Activated CD4-positive, alpha-beta memory T cell treated with anti-CD3 and anti-CD28 coated beads for 36 hours (primary cell): ENCODE measurements at regions of chr1 and their contacts with region 1.

Region 1: DNA sequence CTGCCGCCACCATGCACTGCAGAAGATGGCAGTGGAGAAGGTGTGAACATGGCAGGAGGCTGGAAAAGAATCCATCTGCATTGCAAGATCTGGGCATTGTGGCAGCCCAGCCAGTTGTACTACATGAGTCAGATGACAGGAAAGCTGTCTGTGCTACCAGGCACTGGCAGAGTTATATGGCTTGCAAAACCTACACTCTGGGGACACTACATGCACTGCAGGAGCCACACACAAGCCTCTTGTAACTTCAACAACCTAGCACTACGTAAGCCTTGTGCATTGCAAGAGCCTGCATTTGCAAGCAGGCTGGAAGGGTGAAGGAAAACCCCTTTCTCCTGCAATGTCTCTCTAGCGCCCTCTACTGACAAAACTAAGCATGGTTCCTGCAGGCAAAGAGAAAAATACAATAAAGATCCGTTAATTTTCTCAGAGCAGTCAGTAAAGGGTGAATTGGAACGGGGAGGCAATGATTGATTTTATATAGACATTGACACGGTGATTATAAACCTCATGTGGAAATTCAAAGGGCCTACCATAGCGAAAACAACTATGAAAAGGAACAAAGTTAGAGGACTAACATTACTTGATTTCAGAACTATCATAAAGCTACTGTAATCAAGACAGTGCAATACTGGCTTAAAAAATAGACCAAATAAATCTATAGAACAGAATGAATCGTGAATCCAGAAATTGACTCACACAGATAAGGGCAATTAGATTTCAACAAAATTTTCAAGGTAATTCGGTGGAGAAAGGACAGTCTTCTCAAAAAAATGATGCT is 26.2 kb upstream of the DYNLT5 start:
- DNase-seq: peak; percentile 61
- H3K4me3 Mint-ChIP-seq: no peak overlapping the region
- H3K27ac Mint-ChIP-seq: no peak overlapping the region
- H3K4me1 Mint-ChIP-seq: peaks cover 10% of the 10 kb centered on the region
- H3K27me3 Mint-ChIP-seq: peaks cover 8% of the 10 kb centered on the region

Region 2: GRCh38 chr1:65958561-65959350 is 767.3 kb before region 1 on chr1:
- CTCF ChIA-PET with region 1: no interaction called
- POLR2A ChIA-PET with region 1: no interaction called
- intact Hi-C with region 1: loop called (anchors 5 kb)
- DNase-seq: peak; percentile 13
- H3K4me3 Mint-ChIP-seq: no peak overlapping the region
- H3K27ac Mint-ChIP-seq: no peak overlapping the region
- H3K4me1 Mint-ChIP-seq: no peaks in the 10 kb centered on the region
- H3K27me3 Mint-ChIP-seq: peaks cover 2% of the 10 kb centered on the region

Region 3: GRCh38 chr1:66464802-66465201 is 261.3 kb before region 1 on chr1:
- CTCF ChIA-PET with region 1: no interaction called
- POLR2A ChIA-PET with region 1: no interaction called
- intact Hi-C with region 1: no loop called
- DNase-seq: no peak
- H3K4me3 Mint-ChIP-seq: no peak overlapping the region
- H3K27ac Mint-ChIP-seq: no peak overlapping the region
- H3K4me1 Mint-ChIP-seq: no peaks in the 10 kb centered on the region
- H3K27me3 Mint-ChIP-seq: peaks cover 15% of the 10 kb centered on the region

Region 4: GRCh38 chr1:66607458-66607857 is 118.6 kb before region 1 on chr1:
- CTCF ChIA-PET with region 1: no interaction called
- POLR2A ChIA-PET with region 1: no interaction called
- intact Hi-C with region 1: loop called (anchors 5 kb)
- DNase-seq: no peak
- H3K4me3 Mint-ChIP-seq: no peak overlapping the region
- H3K27ac Mint-ChIP-seq: no peak overlapping the region
- H3K4me1 Mint-ChIP-seq: no peaks in the 10 kb centered on the region
- H3K27me3 Mint-ChIP-seq: peaks cover 16% of the 10 kb centered on the region

Region 5: GRCh38 chr1:66711420-66711819 is 14.7 kb before region 1 on chr1:
- CTCF ChIA-PET with region 1: interaction called, 12 read pairs
- POLR2A ChIA-PET with region 1: no interaction called
- intact Hi-C with region 1: no loop called
- DNase-seq: no peak
- H3K4me3 Mint-ChIP-seq: no peak overlapping the region
- H3K27ac Mint-ChIP-seq: no peak overlapping the region
- H3K4me1 Mint-ChIP-seq: no peaks in the 10 kb centered on the region
- H3K27me3 Mint-ChIP-seq: peaks cover 6% of the 10 kb centered on the region